Left ventricle myocardium superior (tissue), 1 donor: ENCODE measurements at regions of chr17 and their contacts with region 1.

Region 1: GRCh38 chr17:65794572-65794971 is 233.1 kb upstream of the AXIN2 start:
- DNase-seq: no peak
- ATAC-seq: peak; percentile 30

Region 2: DNA sequence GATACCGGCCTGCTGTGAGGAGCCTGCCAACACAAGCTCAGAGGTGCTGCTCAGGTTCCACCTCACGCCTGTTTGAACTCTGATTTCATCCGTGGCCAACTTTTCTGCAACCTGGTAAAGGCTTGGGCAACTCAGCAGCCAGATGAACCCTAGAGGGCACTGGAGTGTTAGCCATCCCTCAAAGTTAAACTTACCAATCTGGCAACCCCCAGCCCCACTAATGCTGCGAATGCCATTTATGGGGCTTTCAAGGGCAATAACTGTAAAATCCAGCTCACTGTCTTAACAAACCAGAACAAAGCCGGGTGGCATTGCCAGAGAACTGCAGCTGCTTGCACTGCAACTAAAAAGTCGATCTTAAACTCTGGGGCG is 338.6 kb before region 1 on chr17:
- intact Hi-C with region 1: loop called (anchors 10 kb)
- DNase-seq: no peak
- ATAC-seq: peak; percentile 90

Region 3: GRCh38 chr17:65850486-65850885 is 55.9 kb after region 1 on chr17:
- intact Hi-C with region 1: no loop called
- DNase-seq: no peak
- ATAC-seq: peak; percentile 29